Right lobe of liver (tissue), 6 donors: ENCODE measurements at regions of chr2 and their contacts with region 1.

Region 1: GRCh38 chr2:176669398-176670174 is 400.3 kb downstream of the MTX2 start:
- DNase-seq: no peak
- ATAC-seq: no peak
- H3K4me3 ChIP-seq: no peak overlapping the region
- H3K27ac ChIP-seq: no peak overlapping the region
- H3K4me1 ChIP-seq: no peaks in the 10 kb centered on the region
- H3K27me3 ChIP-seq: no peaks in the 10 kb centered on the region
- CTCF ChIP-seq: no peak
- POLR2A ChIP-seq: no peak

Region 2: GRCh38 chr2:176392249-176392648 is 277.3 kb before region 1 on chr2:
- intact Hi-C with region 1: no loop called
- DNase-seq: no peak
- ATAC-seq: no peak
- H3K4me3 ChIP-seq: no peak overlapping the region
- H3K27ac ChIP-seq: no peak overlapping the region
- H3K4me1 ChIP-seq: peaks cover 0 to 15% (median 5%) of the 10 kb centered on the region in 4 donors
- H3K27me3 ChIP-seq: no peaks in the 10 kb centered on the region
- CTCF ChIP-seq: no peak
- POLR2A ChIP-seq: no peak

Region 3: DNA sequence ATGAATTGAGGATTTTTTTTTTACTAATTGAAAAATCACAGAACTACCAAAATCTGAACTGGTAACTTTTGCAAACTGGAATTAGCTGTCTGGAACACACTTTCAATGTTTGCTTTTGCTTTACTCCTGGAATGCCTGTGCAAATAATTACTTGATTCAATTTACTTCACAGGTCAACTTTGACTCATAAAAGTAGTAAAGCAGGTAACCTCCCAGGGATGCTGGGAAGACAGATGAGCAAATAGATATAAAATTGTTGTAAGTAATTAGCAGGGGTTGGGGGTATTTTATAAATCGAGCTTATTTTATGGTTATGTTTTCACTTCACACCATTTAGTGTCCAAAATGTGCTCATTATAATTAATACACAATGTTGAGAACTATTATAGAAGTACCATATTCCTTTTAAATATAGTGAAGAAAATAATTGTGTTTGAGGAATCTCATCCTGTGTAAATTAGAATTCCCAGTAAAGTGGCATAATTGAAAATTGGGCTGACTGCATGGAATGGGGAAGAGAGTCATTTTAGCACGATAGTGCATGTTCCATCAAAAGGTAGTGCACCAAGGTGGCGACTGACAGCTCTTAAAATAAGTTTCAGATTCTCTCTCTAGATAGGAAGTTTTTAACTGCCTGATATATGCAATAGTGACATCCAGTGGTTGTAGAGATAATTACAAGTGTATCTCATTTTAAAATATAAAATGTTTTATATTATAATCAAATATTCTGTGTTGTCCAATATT is 144.9 kb after region 1 on chr2:
- intact Hi-C with region 1: loop called in 1 of 2 experiments (anchors 10 kb)
- DNase-seq: no peak
- ATAC-seq: peak; percentile 67 to 86 (median 71)
- H3K4me3 ChIP-seq: no peak overlapping the region
- H3K27ac ChIP-seq: no peak overlapping the region
- H3K4me1 ChIP-seq: no peaks in the 10 kb centered on the region
- H3K27me3 ChIP-seq: no peaks in the 10 kb centered on the region
- CTCF ChIP-seq: peak; percentile 53 to 70 (median 66)
- POLR2A ChIP-seq: no peak